Activated naive CD4-positive, alpha-beta T cell treated with anti-CD3 and anti-CD28 coated beads for 36 hours (primary cell): ENCODE measurements at regions of chr9 and their contacts with region 1.

Region 1: GRCh38 chr9:21395778-21396717 is 10.8 kb upstream of the IFNA2 start:
- DNase-seq: peak; percentile 64
- H3K4me3 Mint-ChIP-seq: peak overlapping the region; percentile 50
- H3K27ac Mint-ChIP-seq: no peak overlapping the region
- H3K4me1 Mint-ChIP-seq: peaks cover 9% of the 10 kb centered on the region
- H3K27me3 Mint-ChIP-seq: peaks cover 39% of the 10 kb centered on the region

Region 2: GRCh38 chr9:21210311-21210710 is 185.7 kb before region 1 on chr9:
- CTCF ChIA-PET with region 1: interaction called, 5 read pairs
- intact Hi-C with region 1: loop called (anchors 5 kb)
- DNase-seq: no peak
- H3K4me3 Mint-ChIP-seq: no peak overlapping the region
- H3K27ac Mint-ChIP-seq: no peak overlapping the region
- H3K4me1 Mint-ChIP-seq: peaks cover 7% of the 10 kb centered on the region
- H3K27me3 Mint-ChIP-seq: peaks cover 5% of the 10 kb centered on the region

Region 3: GRCh38 chr9:21252721-21253547 is 143.1 kb before region 1 on chr9:
- CTCF ChIA-PET with region 1: interaction called, 6 read pairs
- intact Hi-C with region 1: loop called (anchors 2 kb)
- DNase-seq: peak; percentile 38
- H3K4me3 Mint-ChIP-seq: no peak overlapping the region
- H3K27ac Mint-ChIP-seq: no peak overlapping the region
- H3K4me1 Mint-ChIP-seq: peaks cover 4% of the 10 kb centered on the region
- H3K27me3 Mint-ChIP-seq: peaks cover 3% of the 10 kb centered on the region

Region 4: DNA sequence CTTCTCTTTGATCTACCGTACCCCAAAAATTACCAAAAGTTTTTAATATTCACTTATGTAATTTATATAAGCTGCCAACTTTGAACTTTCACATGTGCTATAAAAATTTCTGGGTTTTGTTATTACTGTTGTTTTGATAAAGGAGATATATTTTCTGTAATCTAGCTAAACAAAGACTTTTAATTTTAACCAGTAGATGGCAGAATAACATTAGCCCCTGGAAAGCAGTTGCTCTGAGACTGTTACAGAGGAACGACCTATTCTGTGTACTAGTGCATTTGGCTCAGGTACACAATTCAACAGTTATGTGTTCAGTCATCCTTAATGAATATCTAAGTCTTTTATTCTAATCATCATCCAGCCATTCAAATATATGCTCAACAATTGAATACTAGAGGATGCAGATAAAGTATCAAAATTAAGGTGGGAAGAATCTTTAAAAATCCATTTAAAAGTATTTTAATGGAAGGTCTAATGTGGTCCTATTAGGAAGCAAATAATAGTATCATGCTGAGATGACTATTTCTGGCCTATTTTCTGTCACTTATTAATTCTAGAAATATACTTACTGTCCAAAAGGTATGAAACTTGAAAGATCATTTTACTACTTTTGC is 69.4 kb before region 1 on chr9:
- CTCF ChIA-PET with region 1: interaction called, 61 read pairs
- intact Hi-C with region 1: loop called (anchors 1 kb)
- DNase-seq: no peak
- H3K4me3 Mint-ChIP-seq: no peak overlapping the region
- H3K27ac Mint-ChIP-seq: no peak overlapping the region
- H3K4me1 Mint-ChIP-seq: peaks cover 41% of the 10 kb centered on the region
- H3K27me3 Mint-ChIP-seq: no peaks in the 10 kb centered on the region

Region 5: GRCh38 chr9:21367957-21368356 is 28.1 kb before region 1 on chr9 and contains the start of gene IFNA13:
- CTCF ChIA-PET with region 1: interaction called, 4 read pairs
- intact Hi-C with region 1: loop called (anchors 1 kb)
- DNase-seq: no peak
- H3K4me3 Mint-ChIP-seq: no peak within 1 kb of the TSS
- H3K27ac Mint-ChIP-seq: no peak within 1 kb of the TSS
- H3K4me1 Mint-ChIP-seq: no peaks in the 10 kb centered on the region
- H3K27me3 Mint-ChIP-seq: peaks cover 12% of the 10 kb centered on the region
- total RNA-seq, gene IFNA13: not detected

Region 6: DNA sequence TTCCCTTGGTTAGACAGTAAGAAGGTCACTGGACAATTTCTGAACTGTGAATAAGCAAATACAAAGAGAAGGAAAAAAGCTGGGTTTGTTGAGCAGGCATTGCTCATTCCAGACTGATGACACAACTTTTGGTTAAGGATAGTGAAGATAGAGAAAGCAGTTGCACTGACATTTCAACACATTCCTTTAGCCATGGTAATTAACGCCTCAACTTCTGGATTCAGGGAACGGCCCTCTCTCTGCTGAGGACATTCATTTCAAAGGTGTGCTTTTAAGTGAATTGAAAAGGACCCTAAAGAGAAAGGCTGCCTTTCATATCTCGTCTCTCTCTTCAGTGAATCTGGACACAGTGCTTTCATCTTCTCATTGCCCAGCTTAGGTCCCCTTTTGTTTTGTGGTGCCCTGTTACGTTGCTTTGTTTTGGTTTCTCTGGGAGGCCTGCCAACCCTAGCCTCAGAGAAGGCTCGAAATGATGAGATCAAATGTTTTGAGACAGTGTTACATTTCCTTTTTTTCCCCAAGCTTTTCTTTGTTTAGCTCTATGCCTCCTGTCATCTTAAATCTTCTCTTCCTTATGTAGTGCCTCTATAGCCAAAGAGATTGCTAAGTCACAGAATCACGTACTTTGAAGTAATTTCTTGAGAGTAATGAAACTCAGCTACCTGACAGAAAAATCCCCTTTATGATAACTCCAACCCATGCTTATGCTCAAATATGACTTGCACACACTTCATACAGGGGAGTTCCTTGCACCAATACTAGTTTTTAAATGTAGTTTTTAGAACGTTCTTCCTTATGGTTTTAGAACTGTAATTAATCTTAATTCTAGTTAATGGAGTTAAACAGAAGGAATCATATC is 180.5 kb after region 1 on chr9:
- CTCF ChIA-PET with region 1: no interaction called
- intact Hi-C with region 1: no loop called
- DNase-seq: peak; percentile 80
- H3K4me3 Mint-ChIP-seq: peak overlapping the region; percentile 3
- H3K27ac Mint-ChIP-seq: peak overlapping the region; percentile 68
- H3K4me1 Mint-ChIP-seq: peaks cover 37% of the 10 kb centered on the region
- H3K27me3 Mint-ChIP-seq: peaks cover 2% of the 10 kb centered on the region

Region 7: GRCh38 chr9:21906881-21907280 is 510.8 kb after region 1 on chr9:
- CTCF ChIA-PET with region 1: no interaction called
- intact Hi-C with region 1: no loop called
- DNase-seq: no peak
- H3K4me3 Mint-ChIP-seq: no peak overlapping the region
- H3K27ac Mint-ChIP-seq: no peak overlapping the region
- H3K4me1 Mint-ChIP-seq: no peaks in the 10 kb centered on the region
- H3K27me3 Mint-ChIP-seq: no peaks in the 10 kb centered on the region

Region 8: DNA sequence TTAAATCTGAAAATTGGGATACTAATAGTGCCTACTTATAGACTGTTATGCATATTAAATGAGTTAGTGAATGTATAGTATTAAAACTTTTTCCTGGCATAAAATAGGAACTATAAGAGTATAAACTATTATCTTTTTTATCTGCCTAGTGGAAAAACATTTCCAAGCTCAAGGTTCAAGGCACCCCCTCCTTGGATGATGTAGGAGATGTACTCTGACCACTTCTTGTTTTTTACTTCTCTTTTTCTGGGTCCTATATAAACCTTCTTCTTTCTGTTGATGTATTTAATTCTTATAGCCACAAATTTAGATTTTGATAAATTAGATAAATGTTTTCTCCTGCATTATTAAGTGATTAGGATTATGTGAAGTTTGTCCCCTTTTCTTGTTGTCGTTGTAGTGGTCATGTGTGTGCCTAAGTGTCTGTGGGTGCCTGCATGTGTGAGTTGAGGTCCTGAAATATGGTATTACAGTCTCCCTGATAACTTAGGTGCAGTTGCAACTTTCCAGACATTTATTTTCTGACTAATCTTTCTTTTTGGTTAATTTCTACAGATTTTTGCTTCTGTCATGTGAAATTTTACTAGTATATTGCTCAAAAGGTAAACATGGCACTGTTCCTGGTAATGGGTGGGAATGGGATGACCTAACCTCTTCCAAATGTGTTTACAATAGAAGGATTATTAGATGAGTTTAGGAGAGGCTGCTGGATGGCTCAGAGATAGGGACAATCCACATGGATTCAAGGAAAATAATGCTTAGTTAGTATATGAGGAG is 773.9 kb after region 1 on chr9:
- CTCF ChIA-PET with region 1: no interaction called
- intact Hi-C with region 1: no loop called
- DNase-seq: no peak
- H3K4me3 Mint-ChIP-seq: no peak overlapping the region
- H3K27ac Mint-ChIP-seq: no peak overlapping the region
- H3K4me1 Mint-ChIP-seq: no peaks in the 10 kb centered on the region
- H3K27me3 Mint-ChIP-seq: peaks cover 2% of the 10 kb centered on the region